Mammary epithelial cell (primary cell): ENCODE measurements at regions of chr11 and their contacts with region 1.

Region 1: DNA sequence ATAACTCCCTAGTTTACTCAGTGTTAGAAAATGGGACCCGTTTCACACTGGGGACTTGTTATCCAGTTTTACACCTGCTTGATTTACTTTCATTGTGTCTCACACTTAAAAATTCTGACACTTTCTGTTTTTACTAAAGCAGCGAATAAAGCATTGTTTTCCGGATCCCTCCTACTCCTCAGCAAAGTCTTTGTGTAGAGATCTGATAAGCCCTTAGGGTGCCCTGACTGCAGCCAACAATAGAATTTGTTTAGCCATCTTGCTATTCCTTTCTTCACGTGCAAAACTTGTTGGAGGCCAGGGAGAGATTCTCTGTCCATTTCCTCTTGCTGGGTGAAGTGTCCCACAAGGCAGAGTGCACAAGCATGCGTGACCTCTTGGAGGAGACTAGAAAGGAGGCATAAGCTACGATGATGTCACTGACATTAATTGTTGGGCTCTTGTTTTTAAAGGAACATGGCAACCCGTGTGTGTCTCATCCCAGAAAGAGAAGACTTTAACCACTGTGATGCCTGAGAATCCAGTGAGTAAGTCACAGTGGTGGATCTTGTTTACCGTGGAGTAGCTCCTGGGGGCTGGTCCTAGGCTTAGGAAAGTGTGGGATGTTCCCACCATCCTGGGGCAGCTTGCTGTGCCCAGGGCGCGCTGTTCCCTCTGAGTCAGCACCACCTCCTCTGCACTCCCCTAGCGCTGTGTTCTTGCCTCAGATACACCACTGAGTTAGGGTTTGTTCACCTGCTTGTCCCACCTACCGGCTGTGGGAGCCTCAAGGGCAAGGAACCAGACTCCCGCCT is 27.7 kb downstream of the MICAL2 start:
- DNase-seq: peak; percentile 97
- H3K4me3 ChIP-seq: no peak overlapping the region
- H3K27ac ChIP-seq: peak overlapping the region; percentile 84
- H3K4me1 ChIP-seq: peaks cover 51% of the 10 kb centered on the region
- H3K27me3 ChIP-seq: no peaks in the 10 kb centered on the region
- CTCF ChIP-seq: no peak

Region 2: DNA sequence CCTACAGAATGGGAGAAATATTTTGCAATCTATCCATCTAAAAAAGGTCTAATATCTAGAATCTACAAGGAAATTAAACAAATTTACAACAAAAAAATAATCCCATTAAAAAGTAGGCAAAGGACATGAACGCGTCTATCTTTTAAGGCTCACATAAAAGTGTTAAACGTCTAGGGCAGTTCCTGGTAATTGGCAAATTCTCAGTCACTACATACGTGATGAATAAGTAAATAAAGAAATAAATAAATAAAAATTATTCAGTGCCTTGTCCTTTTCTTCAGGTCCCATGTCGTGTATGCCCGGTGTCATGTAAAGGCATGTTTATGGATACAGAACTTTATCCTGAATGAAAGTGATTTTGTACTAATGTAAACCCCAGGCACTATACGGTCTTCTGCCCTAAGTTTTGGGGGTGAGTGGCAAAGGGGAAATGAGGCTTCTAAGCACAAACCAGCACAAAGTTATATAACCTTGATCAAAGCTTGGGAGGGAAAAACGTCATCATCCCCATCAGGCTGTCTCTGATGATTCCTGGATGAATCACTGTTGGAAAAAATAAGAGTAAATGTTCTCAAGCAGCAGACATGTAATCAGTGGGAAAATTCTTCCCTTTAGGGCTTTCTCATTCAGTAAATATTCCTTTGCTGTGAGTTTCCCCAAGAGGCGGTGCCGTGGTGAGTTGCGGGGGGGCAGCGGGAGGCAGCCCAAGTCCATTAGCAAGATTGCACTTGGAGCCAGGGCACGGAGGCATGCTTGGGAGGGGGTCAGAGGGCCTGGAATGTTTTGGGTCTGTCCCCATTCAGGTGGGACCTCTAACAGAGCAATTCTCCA is 58.2 kb before region 1 on chr11:
- CTCF ChIA-PET with region 1: no interaction called
- dilution Hi-C with region 1: no loop called
- in situ Hi-C with region 1: no loop called
- intact Hi-C with region 1: no loop called
- DNase-seq: peak; percentile 98
- H3K4me3 ChIP-seq: no peak overlapping the region
- H3K27ac ChIP-seq: peak overlapping the region; percentile 99
- H3K4me1 ChIP-seq: peaks cover 41% of the 10 kb centered on the region
- H3K27me3 ChIP-seq: no peaks in the 10 kb centered on the region
- CTCF ChIP-seq: no peak

Region 3: GRCh38 chr11:12110201-12110713 is 27.9 kb before region 1 on chr11 and contains the start of gene MICAL2:
- CTCF ChIA-PET with region 1: no interaction called
- dilution Hi-C with region 1: no loop called
- in situ Hi-C with region 1: no loop called
- intact Hi-C with region 1: loop called (anchors 2 kb)
- DNase-seq: peak; percentile 95
- H3K4me3 ChIP-seq: peak within 1 kb of the TSS; percentile 60 to 81 (median 76)
- H3K27ac ChIP-seq: peak within 1 kb of the TSS; percentile 95
- H3K4me1 ChIP-seq: peaks cover 37% of the 10 kb centered on the region
- H3K27me3 ChIP-seq: no peaks in the 10 kb centered on the region
- CTCF ChIP-seq: no peak
- total RNA-seq, gene MICAL2: 163 to 339 TPM

Region 4: DNA sequence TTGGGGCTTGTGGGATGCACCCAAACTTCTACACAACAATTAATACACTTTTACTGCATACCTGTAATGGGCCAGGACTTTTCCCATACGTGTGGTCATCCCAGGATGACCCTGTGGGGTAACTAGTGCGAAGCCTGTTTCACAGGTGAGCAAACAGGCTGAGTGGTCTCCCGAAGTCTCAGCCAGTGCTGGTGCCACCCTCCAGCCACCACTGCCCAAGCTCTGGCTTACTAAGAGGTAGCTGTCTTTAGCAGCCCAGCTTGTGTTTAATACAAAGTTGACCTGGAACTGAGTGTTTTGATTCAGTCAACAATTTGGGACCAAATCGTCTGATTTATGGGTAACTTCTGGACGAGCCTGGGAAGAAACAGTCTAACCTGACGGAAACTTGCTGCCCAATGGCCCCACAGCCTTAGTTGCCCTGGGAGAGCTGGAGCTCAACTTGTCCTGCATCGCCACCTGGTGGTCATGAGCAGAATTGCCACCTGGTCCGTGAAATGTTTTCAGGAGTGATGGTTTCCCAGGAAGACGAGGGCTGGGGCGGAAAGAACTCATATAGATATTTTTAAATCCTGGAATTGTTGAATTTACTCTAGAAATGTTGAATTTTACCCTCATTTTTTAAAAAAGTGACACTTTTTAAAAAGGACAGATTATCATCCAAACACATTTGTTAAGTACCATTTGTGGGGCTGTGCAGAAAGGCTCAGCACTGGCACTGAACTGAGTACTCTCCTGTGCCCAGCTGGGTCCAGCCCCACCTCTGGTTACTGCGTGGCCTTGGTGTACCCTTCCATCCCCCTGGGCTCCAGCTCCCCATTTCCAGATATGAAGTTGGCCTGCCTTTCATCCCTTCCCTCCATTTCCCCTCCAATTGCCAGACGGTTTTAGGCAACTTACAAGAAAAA is 143.7 kb after region 1 on chr11:
- CTCF ChIA-PET with region 1: interaction called, 11 read pairs
- dilution Hi-C with region 1: no loop called
- in situ Hi-C with region 1: no loop called
- intact Hi-C with region 1: no loop called
- DNase-seq: peak; percentile 67
- H3K4me3 ChIP-seq: no peak overlapping the region
- H3K27ac ChIP-seq: no peak overlapping the region
- H3K4me1 ChIP-seq: peaks cover 44% of the 10 kb centered on the region
- H3K27me3 ChIP-seq: no peaks in the 10 kb centered on the region
- CTCF ChIP-seq: peak; percentile 93 to 96

Region 5: DNA sequence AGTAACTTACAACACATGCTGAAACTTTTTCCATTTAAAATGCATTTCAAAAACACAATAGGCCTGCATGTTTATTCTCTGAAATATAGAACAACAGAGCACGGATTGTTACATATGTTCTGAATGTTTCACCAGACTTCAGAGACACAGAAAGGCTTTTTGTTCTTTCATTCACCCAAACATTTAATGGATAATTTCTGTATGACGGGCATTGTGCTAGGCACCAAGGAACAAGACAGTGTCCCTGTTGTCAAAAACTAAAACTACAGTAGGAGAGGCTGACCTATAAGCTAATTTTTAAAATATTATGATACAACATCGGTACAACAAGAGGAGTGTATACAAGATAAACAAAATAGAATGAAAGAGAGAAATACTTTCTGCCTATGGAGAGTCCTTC is 454.1 kb after region 1 on chr11:
- CTCF ChIA-PET with region 1: no interaction called
- dilution Hi-C with region 1: no loop called
- in situ Hi-C with region 1: no loop called
- intact Hi-C with region 1: no loop called
- DNase-seq: no peak
- H3K4me3 ChIP-seq: no peak overlapping the region
- H3K27ac ChIP-seq: no peak overlapping the region
- H3K4me1 ChIP-seq: peaks cover 5% of the 10 kb centered on the region
- H3K27me3 ChIP-seq: no peaks in the 10 kb centered on the region
- CTCF ChIP-seq: no peak

Region 6: GRCh38 chr11:12606597-12606996 is 468.5 kb after region 1 on chr11:
- CTCF ChIA-PET with region 1: no interaction called
- dilution Hi-C with region 1: no loop called
- in situ Hi-C with region 1: no loop called
- intact Hi-C with region 1: no loop called
- DNase-seq: no peak
- H3K4me3 ChIP-seq: no peak overlapping the region
- H3K27ac ChIP-seq: no peak overlapping the region
- H3K4me1 ChIP-seq: no peaks in the 10 kb centered on the region
- H3K27me3 ChIP-seq: no peaks in the 10 kb centered on the region
- CTCF ChIP-seq: no peak